ENCODE measurements at regions of chrX and their contacts with region 1.

Region 1: GRCh38 chrX:7542587-7543380 is 300.2 kb upstream of the VCX start:
- DNase-seq: no peak
- ATAC-seq: no peak
- H3K4me3 ChIP-seq: no peak overlapping the region
- H3K4me3 Mint-ChIP-seq: no peak overlapping the region
- H3K27ac ChIP-seq: no peak overlapping the region
- H3K27ac Mint-ChIP-seq: no peak overlapping the region
- H3K4me1 ChIP-seq: no peaks in the 10 kb centered on the region
- H3K4me1 Mint-ChIP-seq: no peaks in the 10 kb centered on the region
- H3K27me3 ChIP-seq: no peaks in the 10 kb centered on the region
- H3K27me3 Mint-ChIP-seq: no peaks in the 10 kb centered on the region

Region 2: DNA sequence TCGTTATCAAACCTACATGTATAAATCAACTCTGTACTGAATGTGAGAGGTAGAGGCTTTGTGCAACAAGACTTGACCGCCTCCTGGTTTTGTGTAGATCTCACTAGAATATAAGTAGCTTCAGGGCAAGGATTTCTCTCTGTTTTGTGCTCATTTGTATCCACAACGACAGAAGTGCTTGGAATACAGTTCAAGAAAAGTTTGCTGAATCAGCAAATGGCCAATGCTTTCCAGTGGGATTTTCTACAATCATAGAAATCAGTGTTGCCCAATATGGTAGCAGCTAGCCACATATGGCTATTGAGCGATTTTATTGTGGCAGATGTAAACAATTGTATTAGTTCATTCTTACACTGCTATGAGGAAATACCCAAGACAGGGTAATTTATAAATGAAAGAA is 1135.2 kb before region 1 on chrX:
- CTCF ChIA-PET with region 1: no interaction called
- POLR2A ChIA-PET with region 1: no interaction called
- intact Hi-C with region 1: loop called in 1 of 2 experiments (anchors 10 kb)
- DNase-seq: no peak
- ATAC-seq: no peak
- H3K4me3 ChIP-seq: no peak overlapping the region
- H3K4me3 Mint-ChIP-seq: no peak overlapping the region
- H3K27ac ChIP-seq: no peak overlapping the region
- H3K27ac Mint-ChIP-seq: no peak overlapping the region
- H3K4me1 ChIP-seq: no peaks in the 10 kb centered on the region
- H3K4me1 Mint-ChIP-seq: no peaks in the 10 kb centered on the region
- H3K27me3 ChIP-seq: no peaks in the 10 kb centered on the region
- H3K27me3 Mint-ChIP-seq: no peaks in the 10 kb centered on the region

Region 3: GRCh38 chrX:7574325-7574724 is 31.5 kb after region 1 on chrX:
- CTCF ChIA-PET with region 1: no interaction called
- POLR2A ChIA-PET with region 1: no interaction called
- intact Hi-C with region 1: no loop called
- DNase-seq: no peak
- ATAC-seq: no peak
- H3K4me3 ChIP-seq: no peak overlapping the region
- H3K4me3 Mint-ChIP-seq: no peak overlapping the region
- H3K27ac ChIP-seq: no peak overlapping the region
- H3K27ac Mint-ChIP-seq: no peak overlapping the region
- H3K4me1 ChIP-seq: no peaks in the 10 kb centered on the region
- H3K4me1 Mint-ChIP-seq: no peaks in the 10 kb centered on the region
- H3K27me3 ChIP-seq: no peaks in the 10 kb centered on the region
- H3K27me3 Mint-ChIP-seq: no peaks in the 10 kb centered on the region